ENCODE measurements at regions of chr5 and their contacts with region 1.

Region 1: DNA sequence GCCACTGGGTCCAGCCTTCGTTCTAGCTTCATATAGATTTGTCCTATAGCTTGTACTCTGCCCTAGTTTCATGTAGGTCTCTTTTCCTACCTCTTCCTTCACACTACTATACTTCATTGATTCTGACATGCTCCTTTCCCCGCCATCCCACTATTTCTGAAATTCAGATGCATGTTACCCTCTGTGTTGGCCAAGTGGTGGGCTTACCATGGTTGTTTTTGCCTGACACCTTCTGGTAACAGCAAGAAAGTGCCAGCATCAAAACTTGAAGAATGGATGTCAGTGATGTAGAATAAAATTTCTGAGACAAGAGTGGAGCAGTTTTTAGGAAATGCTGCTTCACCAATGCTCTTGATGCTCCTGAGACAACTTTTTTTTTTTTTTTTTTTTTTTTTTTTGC is 19.5 kb upstream of the SERINC5 start:
- DNase-seq: no peak
- H3K4me3 ChIP-seq: no peak overlapping the region
- H3K27me3 ChIP-seq: no peaks in the 10 kb centered on the region; the same call in 1 of the 2 replicates
- CTCF ChIP-seq: peak; percentile 46

Region 2: GRCh38 chr5:80092486-80093107 is 182.8 kb before region 1 on chr5:
- CTCF ChIA-PET with region 1: interaction called, 33 read pairs
- POLR2A ChIA-PET with region 1: no interaction called
- DNase-seq: no peak
- H3K4me3 ChIP-seq: no peak overlapping the region
- H3K27me3 ChIP-seq: no peaks in the 10 kb centered on the region
- CTCF ChIP-seq: no peak

Region 3: DNA sequence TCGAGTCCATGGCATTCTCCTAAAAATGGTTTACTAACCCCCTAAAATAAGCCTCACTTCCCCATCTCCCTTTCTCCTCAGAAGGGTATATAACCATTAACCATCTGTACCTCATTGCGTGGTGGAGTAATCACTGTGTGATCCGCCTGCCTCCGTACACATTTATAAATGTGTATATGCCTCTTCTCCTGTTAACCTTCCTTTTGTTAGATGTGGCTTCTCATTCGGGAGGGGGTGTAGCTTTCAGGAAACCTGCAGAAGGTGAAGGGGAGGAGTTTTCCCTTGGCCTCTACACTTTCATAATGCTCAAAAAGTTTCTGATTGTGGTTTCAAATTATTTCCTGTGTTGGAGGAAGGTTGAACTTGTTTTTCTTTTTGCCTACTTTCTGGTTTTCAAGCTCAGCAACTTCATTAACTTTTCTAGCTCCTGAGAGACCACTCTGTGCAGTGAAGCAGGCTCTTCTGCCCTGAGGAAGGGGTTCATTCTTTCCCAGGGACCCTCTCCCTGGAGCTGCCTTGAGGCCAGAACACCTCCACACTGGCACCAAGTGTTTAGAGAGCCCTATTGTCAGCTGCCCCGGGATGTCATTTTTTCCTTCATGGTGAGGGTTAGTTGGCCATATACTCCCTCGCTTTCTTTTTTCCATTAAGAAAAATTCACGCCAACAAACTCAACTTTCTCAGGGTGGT is 731.7 kb after region 1 on chr5:
- CTCF ChIA-PET with region 1: no interaction called
- POLR2A ChIA-PET with region 1: no interaction called
- DNase-seq: no peak
- H3K4me3 ChIP-seq: no peak overlapping the region
- H3K27me3 ChIP-seq: no peaks in the 10 kb centered on the region
- CTCF ChIP-seq: no peak

Measured in BJ (cell line).